GM12878 (cell line): ENCODE measurements at regions of chr2 and their contacts with region 1.

Region 1: DNA sequence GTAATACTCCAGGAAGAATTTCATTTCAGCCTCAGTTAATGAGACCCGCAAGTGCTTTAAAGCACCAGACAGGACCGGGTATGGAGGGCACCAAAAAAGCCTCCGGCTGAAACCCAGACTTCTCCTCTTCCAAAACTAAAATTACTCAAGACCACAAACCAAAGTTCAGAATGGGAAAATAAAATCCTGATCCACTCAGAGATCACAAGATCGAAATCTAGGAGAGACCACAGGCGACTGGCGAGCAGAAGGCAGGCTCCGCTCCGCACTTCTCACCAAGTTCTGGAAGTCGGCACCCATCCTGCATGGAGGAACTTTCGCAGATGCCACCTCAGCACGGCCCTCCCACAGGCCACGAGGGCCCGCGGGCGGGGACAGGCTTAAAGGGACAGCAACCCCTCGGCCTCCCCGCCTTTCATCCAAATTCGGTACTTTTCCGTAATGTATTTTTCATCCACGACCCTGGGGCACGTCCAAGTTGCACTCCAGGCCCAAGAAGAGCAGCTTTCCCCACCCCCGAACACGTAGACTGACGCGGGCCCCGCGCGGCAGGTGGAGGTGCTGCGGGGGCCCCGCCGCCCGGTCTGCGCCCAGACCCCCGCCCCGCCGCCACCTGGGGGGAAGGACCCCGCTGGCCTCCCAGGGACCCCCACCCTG is 43.7 kb downstream of the HDLBP start:
- DNase-seq: no peak
- ATAC-seq: peak; percentile 85
- H3K4me3 ChIP-seq: peak overlapping the region; percentile 75
- H3K27ac ChIP-seq: peak overlapping the region; percentile 79
- H3K4me1 ChIP-seq: peaks cover 17% of the 10 kb centered on the region
- H3K27me3 ChIP-seq: no peaks in the 10 kb centered on the region
- CTCF ChIP-seq: no peak
- EP300 ChIP-seq: no peak
- POLR2A ChIP-seq: peak; percentile 40
- RAD21 ChIP-seq: no peak

Region 2: DNA sequence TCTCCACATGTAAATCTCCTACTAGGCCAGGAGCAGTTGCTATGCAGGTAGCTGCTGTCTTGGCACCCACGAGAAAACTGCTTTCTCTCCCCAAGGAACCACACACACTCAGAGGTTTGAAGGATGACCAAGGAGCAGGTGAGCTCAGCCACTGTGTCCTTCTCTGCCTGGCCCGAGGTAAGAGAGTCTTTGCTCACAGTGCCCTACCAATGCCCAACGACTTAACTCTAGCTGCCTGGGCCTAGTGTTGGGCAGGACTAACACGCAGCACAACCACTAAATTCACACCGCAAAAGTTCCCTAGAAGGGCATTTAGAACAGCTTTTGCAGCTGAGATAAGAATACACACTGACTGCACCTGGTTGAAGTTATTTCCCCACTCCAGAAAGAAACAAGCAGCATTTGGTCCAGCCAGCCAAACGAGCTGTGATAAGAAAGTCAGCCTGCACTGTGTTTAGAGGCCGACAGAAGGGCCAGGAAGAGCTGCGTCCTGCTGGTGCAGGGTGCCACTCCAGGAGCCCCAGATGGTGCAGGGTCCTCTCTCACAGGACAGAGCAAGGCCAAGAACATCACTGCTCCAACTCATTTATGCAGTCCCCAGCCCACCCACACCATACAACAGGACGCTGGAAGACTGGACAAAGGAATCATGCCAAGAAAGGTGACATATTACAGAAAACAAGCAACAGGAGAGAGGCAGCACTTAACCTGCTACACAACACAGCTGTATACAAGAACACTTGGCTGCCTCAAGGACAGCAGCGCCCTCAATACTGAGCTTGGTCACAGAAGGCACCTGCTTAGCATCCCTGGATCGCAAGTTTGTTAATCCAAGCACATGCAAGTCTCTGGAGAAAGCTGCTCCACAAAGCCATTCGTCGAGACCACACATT is 31.2 kb after region 1 on chr2:
- CTCF ChIA-PET with region 1: interaction called, 3 read pairs
- POLR2A ChIA-PET with region 1: interaction called, 4 read pairs
- RAD21 ChIA-PET with region 1: no interaction called
- SMC1A ChIA-PET with region 1: interaction called, 4 read pairs
- in situ Hi-C with region 1: no loop called
- intact Hi-C with region 1: loop called (anchors 2 kb)
- DNase-seq: no peak
- ATAC-seq: 0 out of 3 replicates have a peak, but pooled peaks have one; percentile 4
- H3K4me3 ChIP-seq: no peak overlapping the region
- H3K27ac ChIP-seq: peak overlapping the region; percentile 24; the same call in 1 of the 2 replicates
- H3K4me1 ChIP-seq: peaks cover 19% of the 10 kb centered on the region
- H3K27me3 ChIP-seq: no peaks in the 10 kb centered on the region
- CTCF ChIP-seq: no peak
- EP300 ChIP-seq: no peak
- POLR2A ChIP-seq: no peak
- RAD21 ChIP-seq: no peak